Activated CD4-positive, alpha-beta T cell treated with anti-CD3 and anti-CD28 coated beads for 36 hours (primary cell): ENCODE measurements at regions of chr13 and their contacts with region 1.

Region 1: GRCh38 chr13:30253830-30254229 is 53.5 kb downstream of the KATNAL1 start:
- DNase-seq: no peak
- ATAC-seq: peak; percentile 53
- H3K4me3 Mint-ChIP-seq: no peak overlapping the region
- H3K27ac Mint-ChIP-seq: peak overlapping the region; percentile 14
- H3K4me1 Mint-ChIP-seq: peaks cover 22% of the 10 kb centered on the region
- H3K27me3 Mint-ChIP-seq: no peaks in the 10 kb centered on the region

Region 2: GRCh38 chr13:29270271-29270985 is 983.4 kb before region 1 on chr13:
- CTCF ChIA-PET with region 1: no interaction called
- POLR2A ChIA-PET with region 1: no interaction called
- intact Hi-C with region 1: no loop called
- DNase-seq: no peak
- ATAC-seq: no peak
- H3K4me3 Mint-ChIP-seq: no peak overlapping the region
- H3K27ac Mint-ChIP-seq: no peak overlapping the region
- H3K4me1 Mint-ChIP-seq: no peaks in the 10 kb centered on the region
- H3K27me3 Mint-ChIP-seq: no peaks in the 10 kb centered on the region

Region 3: GRCh38 chr13:30142486-30143211 is 111.2 kb before region 1 on chr13:
- CTCF ChIA-PET with region 1: no interaction called
- POLR2A ChIA-PET with region 1: no interaction called
- intact Hi-C with region 1: loop called in 1 of 2 experiments (anchors 1 kb)
- DNase-seq: peak; percentile 66
- ATAC-seq: peak; percentile 49
- H3K4me3 Mint-ChIP-seq: no peak overlapping the region
- H3K27ac Mint-ChIP-seq: peak overlapping the region; percentile 84
- H3K4me1 Mint-ChIP-seq: peaks cover 62% of the 10 kb centered on the region
- H3K27me3 Mint-ChIP-seq: no peaks in the 10 kb centered on the region

Region 4: DNA sequence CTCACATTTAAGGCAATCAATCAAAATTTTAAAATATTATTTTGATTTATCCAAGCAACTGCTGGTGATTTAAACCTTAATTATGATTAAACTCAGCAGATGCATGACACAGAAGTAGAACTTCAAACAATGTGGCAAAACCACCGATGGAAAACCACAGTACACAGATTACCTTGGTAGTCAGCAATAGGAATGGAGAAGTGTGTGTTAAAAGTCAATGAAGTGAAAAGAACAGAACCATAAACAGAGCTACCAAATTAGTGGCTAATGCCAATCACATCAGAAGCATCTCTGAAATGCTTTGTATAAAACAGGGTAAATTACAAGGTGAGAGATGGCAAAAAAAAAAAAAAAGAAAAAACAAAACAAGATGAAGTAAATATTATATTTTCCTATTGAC is 22.3 kb after region 1 on chr13:
- CTCF ChIA-PET with region 1: no interaction called
- POLR2A ChIA-PET with region 1: no interaction called
- intact Hi-C with region 1: no loop called
- DNase-seq: no peak
- ATAC-seq: no peak
- H3K4me3 Mint-ChIP-seq: no peak overlapping the region
- H3K27ac Mint-ChIP-seq: no peak overlapping the region
- H3K4me1 Mint-ChIP-seq: peaks cover 3% of the 10 kb centered on the region
- H3K27me3 Mint-ChIP-seq: no peaks in the 10 kb centered on the region